ENCODE measurements at regions of chr15 and their contacts with region 1.

Region 1: DNA sequence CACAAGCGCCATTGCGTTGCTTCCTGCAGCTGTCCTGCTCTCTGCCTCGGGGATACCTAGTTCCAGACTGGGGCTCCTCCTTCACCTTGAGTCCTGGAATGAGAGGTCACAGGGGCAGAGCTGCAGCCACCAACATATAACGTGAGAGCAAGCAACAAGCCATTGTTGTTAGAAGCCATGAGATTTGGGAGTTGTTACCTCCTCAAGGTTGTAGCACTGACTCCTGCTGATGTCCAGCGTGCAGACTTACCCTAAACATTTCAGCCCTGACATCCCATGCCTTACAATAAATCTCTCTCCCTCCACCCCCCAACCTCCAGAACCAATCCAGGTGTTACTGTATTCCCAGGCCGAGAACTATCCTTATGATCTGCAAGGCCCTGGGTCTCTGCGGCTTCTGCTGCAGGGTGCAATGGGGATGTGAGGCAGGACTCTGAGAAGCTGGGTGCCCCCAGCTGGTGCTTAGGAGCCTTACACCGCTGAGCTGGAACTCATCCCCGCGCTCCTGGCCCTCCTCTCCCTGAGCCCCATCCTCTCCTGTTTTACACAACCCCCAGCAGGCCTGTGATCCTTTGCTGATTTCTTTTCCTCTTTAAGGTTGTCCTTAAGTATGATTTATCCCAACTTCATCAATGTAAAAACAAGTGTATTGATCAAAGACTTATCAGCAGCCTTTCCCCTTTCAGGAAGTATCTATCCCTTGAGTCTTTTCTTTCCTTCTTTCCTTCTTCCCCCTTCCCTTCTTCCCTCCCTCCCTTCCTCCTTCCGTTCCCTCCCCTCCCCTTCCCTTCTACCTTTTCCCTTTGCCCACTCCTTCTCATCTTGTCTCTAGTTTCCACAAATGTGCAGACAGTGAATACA is 84.2 kb upstream of the ABHD2 start:
- DNase-seq: no peak
- ATAC-seq: peak; percentile 91

Region 2: DNA sequence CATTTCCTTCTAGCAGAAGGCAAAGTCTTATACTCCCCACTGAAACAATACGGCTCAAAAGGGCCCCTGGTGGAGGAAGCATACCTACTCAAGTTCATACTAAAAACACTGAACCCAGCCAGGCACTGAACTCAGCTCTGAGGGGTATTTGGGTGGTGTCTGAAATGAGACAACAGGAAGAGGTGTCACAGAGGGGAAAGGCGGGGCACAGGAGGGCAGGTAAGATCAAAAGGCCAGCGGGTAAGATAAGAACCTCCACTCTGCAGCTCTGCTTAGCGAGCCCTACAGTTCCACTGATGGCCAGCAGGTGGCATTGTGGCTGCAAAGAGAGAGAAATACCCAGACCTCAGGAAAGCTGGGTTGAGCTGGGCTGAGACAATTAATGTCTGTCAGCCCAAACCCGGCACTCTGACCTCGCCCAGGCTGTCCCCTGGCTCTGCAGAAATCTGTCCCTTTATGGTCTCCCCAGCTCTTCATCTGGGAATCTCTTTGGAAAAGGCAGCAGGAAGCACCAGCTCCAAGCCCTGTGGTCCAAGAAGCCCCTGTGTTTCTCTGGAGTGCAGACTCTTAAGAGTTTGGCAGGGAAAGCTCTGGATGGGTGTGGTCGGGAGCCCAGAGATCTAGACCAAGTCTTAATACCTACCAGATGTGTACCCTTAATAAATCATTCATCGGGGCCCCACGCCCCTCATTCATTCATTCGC is 99.3 kb before region 1 on chr15:
- intact Hi-C with region 1: loop called (anchors 5 kb)
- DNase-seq: peak; percentile 94
- ATAC-seq: peak; percentile 83

Measured in sciatic nerve (tissue), 2 donors.